ENCODE measurements at regions of chr12 and their contacts with region 1.

Region 1: DNA sequence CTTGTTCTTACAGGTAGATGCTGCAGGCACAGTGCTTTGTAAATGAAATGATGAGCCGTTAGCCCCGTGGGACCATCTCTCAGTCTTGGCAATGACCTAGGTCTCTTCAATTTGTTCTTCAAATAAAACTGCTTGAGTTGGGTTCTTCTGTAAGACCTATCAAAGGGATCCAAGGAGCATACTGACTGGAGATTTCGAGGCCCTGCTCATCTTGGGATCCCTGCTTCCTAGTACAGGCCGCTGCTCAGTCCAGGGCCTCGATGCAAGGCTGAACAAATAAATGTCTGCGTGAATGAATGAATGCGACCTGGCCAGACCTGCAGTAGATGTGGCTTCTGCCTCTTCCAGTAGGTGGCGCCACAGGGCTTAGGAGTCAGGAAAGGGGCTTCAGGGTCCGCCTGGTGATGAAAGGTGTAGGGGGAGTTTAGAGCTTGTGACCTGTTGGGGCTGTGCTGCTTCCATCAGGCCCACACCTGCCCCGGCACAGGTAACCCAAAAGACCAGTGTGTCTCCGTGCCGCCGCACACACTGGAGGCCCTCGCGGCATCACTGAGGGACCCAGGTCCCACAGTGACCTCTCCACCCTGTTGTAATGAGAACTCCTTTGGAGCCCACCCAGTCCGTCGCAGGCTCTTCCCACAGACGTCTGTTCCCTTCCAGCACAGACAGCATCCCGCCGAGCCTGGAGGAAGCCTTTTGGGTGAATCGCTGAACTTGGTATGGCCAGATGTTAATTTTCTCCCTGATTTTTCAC is 4.4 kb downstream of the CACNA1C start:
- DNase-seq: peak; percentile 67
- H3K4me3 Mint-ChIP-seq: no peak overlapping the region
- H3K27ac Mint-ChIP-seq: no peak overlapping the region
- H3K4me1 Mint-ChIP-seq: no peaks in the 10 kb centered on the region
- H3K27me3 Mint-ChIP-seq: peaks cover 26% of the 10 kb centered on the region
- CTCF ChIP-seq: peak; percentile 94

Region 2: GRCh38 chr12:2034633-2035430 is 22.4 kb before region 1 on chr12:
- CTCF ChIA-PET with region 1: no interaction called
- POLR2A ChIA-PET with region 1: no interaction called
- intact Hi-C with region 1: no loop called
- DNase-seq: peak; percentile 53
- H3K4me3 Mint-ChIP-seq: peak overlapping the region; percentile 40
- H3K27ac Mint-ChIP-seq: no peak overlapping the region
- H3K4me1 Mint-ChIP-seq: peaks cover 5% of the 10 kb centered on the region
- H3K27me3 Mint-ChIP-seq: peaks cover 86% of the 10 kb centered on the region
- CTCF ChIP-seq: peak; percentile 59

Region 3: GRCh38 chr12:2267703-2268501 is 210.7 kb after region 1 on chr12:
- CTCF ChIA-PET with region 1: interaction called, 4 read pairs
- POLR2A ChIA-PET with region 1: no interaction called
- intact Hi-C with region 1: loop called (anchors 5 kb)
- DNase-seq: no peak
- H3K4me3 Mint-ChIP-seq: no peak overlapping the region
- H3K27ac Mint-ChIP-seq: no peak overlapping the region
- H3K4me1 Mint-ChIP-seq: peaks cover 24% of the 10 kb centered on the region
- H3K27me3 Mint-ChIP-seq: no peaks in the 10 kb centered on the region
- CTCF ChIP-seq: no peak

Region 4: GRCh38 chr12:2284857-2285256 is 227.6 kb after region 1 on chr12:
- CTCF ChIA-PET with region 1: interaction called, 13 read pairs
- POLR2A ChIA-PET with region 1: interaction called, 3 read pairs
- intact Hi-C with region 1: loop called (anchors 1 kb)
- DNase-seq: peak; percentile 78
- H3K4me3 Mint-ChIP-seq: no peak overlapping the region
- H3K27ac Mint-ChIP-seq: no peak overlapping the region
- H3K4me1 Mint-ChIP-seq: no peaks in the 10 kb centered on the region
- H3K27me3 Mint-ChIP-seq: no peaks in the 10 kb centered on the region
- CTCF ChIP-seq: peak; percentile 70